HEK293T (cell line): ENCODE measurements at regions of chr20 and their contacts with region 1.

Region 1: DNA sequence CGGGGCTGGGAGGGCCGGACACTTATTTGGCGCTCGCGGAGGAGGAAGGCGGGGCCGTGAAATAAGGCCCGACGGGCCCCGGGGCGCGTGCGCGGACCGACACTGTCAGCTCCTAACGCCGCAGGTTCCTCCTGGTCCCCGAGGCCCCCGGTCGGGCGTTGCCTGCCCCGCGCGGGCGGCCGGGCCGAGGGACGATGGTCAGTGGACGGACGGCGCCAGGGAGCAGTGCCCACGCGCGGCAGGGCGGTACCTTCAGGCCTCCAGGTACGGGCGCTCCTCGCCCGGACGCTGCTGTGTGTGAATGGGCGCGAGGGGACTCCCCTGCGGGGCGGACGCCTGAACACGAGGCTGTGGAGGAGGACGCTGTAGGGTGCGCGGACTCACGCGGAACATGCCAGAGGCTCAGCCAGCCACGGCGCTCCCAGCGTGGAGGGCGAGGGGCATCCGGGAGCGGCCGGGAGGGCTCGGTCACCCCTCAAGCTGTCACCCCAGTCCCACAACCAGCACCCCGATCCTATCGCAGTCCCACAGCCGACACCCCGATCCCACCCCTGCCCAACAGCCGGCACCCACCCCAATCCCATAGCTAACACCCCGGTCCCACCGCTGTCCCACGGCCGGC is 339 bp upstream of the GMEB2 start:
- DNase-seq: peak; percentile 95

Region 2: DNA sequence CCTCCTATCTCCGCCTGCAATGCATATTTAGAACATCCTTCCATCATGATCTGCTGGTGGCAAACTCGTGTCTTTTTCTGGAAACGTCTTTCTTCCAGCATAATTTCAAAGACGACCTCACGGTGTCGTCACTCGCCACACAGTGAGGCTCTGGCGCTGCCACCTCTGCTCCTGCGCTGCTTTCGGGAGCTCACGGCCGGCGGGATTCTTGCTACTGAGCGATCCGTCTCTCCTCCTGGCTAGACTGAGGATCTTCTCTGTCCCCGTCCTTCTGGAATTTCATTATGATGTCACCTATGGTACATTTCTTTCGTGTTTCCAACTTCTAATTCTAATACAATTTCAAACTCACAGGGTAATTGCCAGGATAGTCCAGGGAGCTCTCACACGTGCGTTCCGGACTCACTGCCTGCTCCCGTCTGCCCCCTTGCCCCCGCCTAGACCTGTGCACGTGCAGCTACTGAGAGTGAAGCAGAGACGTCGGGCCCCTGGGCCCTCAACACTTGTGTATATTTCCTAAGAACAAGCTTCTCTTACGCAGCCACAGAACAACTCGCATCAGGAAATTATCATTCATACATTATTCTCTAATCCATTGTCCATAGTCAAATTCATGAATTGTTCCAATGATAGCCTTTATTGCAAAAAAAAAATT is 27.7 kb before region 1 on chr20:
- CTCF ChIA-PET with region 1: no interaction called
- POLR2A ChIA-PET with region 1: no interaction called
- DNase-seq: no peak

Region 3: DNA sequence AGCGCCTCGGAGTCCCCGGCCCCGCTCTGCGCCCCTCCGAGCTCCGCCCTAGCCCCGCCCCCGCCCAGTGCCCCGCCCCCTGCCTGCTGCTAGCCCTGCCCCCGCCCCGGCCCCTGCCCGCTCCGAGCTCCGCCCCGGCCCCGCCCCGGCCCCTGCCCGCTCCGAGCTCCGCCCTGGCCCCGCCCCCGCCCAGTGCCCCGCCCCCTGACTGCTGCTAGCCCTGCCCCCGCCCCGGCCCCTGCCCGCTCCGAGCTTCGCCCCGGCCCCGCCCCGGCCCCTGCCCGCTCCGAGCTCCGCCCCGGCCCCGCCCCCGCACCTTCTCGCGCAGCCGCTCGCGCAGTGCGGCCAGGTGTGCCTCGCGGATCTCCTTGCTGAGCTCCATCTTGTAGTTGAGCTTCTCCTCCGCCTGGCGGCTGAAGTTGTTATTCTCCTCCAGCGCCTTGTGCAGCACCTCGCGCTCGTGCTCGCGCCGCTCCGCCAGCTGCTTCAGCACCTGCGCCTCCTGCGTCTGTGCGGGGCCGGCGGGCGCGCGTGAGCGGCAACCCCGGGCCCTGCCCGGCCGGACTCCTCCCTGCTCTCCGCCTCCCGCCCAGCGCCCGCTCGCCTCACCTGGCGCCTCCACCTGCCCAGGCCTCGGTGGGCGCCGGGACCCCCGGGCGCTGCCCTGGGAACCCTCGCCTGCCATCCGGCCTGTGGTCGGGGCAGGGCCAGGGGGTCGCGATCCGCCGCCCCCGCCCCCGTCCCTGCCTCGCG is 14.7 kb after region 1 on chr20:
- CTCF ChIA-PET with region 1: interaction called, 3 read pairs
- POLR2A ChIA-PET with region 1: interaction called, 13 read pairs
- DNase-seq: peak; percentile 98